ENCODE measurements at regions of chr11 and their contacts with region 1.

Region 1: DNA sequence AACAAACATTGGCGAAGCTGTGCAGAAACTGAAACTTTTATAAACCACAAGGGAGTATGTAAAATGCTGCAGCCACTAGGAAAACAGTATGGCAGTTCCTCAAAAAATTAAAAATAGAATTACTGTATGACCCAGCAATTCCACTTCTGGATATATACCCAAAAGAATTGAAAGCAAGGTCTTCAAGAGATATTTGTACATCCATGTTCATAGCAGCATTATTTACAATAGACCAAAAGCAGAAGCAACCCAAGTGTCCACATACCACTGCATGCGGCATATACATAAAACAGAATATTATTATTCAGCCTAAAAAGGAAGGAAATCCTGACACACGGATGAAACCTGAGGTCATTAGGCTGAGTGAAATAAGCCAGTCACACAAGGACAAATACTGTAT is 85.8 kb downstream of the RELT start:
- DNase-seq: no peak
- ATAC-seq: no peak
- H3K4me3 ChIP-seq: no peak overlapping the region
- H3K27ac ChIP-seq: no peak overlapping the region
- H3K4me1 ChIP-seq: peaks cover 7% of the 10 kb centered on the region
- H3K27me3 ChIP-seq: no peaks in the 10 kb centered on the region
- CTCF ChIP-seq: no peak
- POLR2A ChIP-seq: no peak
- RAD21 ChIP-seq: no peak

Region 2: DNA sequence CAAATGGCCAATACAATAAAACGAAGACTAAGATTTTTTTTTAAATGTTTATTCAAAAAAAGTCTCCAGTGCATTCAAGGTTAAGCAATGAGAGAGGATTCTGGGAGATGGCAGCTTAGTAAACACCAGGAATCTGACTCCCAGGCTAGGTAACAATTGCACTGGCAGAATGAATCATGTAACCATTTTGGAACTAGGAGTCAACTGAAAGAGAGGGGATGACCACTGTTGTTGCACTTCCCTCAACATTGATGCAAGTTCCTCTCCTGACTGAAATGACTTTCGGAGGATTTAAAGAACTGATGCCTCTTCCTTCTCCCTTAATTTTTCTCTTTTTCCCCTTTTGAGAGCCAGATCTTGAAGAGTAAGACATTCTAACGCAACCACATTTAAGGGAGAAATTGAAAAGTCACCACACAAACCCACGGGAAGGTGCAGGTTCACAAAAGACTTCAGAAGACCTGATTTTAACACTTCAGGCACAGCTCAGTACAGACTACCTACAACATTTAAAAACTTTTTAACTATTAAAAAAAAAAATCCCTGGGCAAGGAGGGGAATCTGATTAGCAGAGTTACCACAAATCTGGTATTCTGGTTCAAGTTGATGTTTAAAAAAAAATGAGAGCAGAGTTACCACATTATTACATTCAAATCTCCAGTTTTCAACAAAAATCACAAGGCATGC is 376.6 kb before region 1 on chr11:
- CTCF ChIA-PET with region 1: no interaction called
- POLR2A ChIA-PET with region 1: no interaction called
- dilution Hi-C with region 1: no loop called
- in situ Hi-C with region 1: no loop called
- intact Hi-C with region 1: no loop called
- DNase-seq: peak; percentile 63
- ATAC-seq: peak; percentile 61
- H3K4me3 ChIP-seq: no peak overlapping the region
- H3K27ac ChIP-seq: no peak overlapping the region
- H3K4me1 ChIP-seq: peaks cover 6% of the 10 kb centered on the region
- H3K27me3 ChIP-seq: no peaks in the 10 kb centered on the region
- CTCF ChIP-seq: no peak
- POLR2A ChIP-seq: no peak
- RAD21 ChIP-seq: no peak

Region 3: DNA sequence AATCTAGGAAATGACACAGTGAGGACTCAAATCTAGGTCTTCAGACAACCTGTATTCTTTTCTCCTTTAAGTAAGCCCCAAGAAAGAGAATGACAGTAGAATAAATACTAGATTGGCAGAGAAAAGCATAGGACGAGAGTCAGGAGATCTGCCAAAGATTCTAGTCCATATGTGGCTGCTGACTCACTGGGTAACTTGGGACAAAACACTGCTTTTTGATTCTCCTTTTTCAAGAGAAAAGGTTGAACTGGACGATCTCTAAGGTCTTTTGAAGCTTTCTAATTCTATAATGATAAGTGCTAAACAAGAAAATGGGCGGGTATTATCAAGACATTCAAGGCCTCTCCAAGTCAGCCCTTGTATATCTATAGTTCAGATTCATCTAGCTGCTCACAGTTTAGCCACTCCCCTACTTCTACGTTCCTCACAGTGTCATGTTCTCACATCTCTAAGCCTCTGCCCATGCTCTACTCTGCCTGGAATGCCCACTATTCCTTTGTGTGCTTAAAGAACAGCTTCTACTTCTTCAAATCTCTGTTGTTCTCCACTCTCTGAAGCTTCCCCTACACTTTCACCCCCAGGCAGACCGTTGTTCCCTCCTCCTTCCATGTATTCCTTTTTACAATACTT is 32.7 kb before region 1 on chr11:
- CTCF ChIA-PET with region 1: interaction called, 3 read pairs
- POLR2A ChIA-PET with region 1: no interaction called
- dilution Hi-C with region 1: no loop called
- in situ Hi-C with region 1: no loop called
- intact Hi-C with region 1: loop called (anchors 1 kb)
- DNase-seq: peak; percentile 75
- ATAC-seq: peak; percentile 91
- H3K4me3 ChIP-seq: no peak overlapping the region
- H3K27ac ChIP-seq: peak overlapping the region; percentile 28; the same call in 1 of the 2 replicates
- H3K4me1 ChIP-seq: peaks cover 13% of the 10 kb centered on the region
- H3K27me3 ChIP-seq: no peaks in the 10 kb centered on the region
- CTCF ChIP-seq: no peak
- POLR2A ChIP-seq: no peak
- RAD21 ChIP-seq: no peak

Region 4: GRCh38 chr11:73478738-73479347 is 16.9 kb after region 1 on chr11:
- CTCF ChIA-PET with region 1: interaction called, 18 read pairs
- POLR2A ChIA-PET with region 1: no interaction called
- dilution Hi-C with region 1: no loop called
- in situ Hi-C with region 1: no loop called
- intact Hi-C with region 1: no loop called
- DNase-seq: peak; percentile 42
- ATAC-seq: peak; percentile 89
- H3K4me3 ChIP-seq: no peak overlapping the region
- H3K27ac ChIP-seq: no peak overlapping the region
- H3K4me1 ChIP-seq: peaks cover 3% of the 10 kb centered on the region
- H3K27me3 ChIP-seq: no peaks in the 10 kb centered on the region
- CTCF ChIP-seq: peak; percentile 74
- POLR2A ChIP-seq: no peak
- RAD21 ChIP-seq: peak; percentile 68

Region 5: DNA sequence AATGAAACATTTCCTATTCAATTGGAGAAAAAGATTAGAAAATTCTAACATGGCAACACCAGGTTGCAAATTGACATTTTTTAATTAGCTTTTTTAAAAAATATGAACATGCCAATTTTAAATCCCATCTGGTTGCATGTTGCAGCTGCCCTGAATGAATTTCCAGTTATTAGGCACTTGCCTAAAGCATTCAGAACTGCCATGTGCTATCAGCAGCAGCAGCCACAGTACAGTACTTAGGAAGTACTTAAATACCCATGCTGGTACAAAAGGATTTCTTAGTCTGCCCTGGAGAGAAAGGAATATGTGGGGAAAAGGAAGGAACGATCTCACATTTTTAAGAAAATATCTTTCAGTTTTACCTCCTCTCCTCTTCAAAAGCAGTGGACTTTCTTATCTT is 89.7 kb after region 1 on chr11:
- CTCF ChIA-PET with region 1: no interaction called
- POLR2A ChIA-PET with region 1: no interaction called
- dilution Hi-C with region 1: no loop called
- in situ Hi-C with region 1: no loop called
- intact Hi-C with region 1: no loop called
- DNase-seq: no peak
- ATAC-seq: no peak
- H3K4me3 ChIP-seq: no peak overlapping the region
- H3K27ac ChIP-seq: no peak overlapping the region
- H3K4me1 ChIP-seq: peaks cover 2% of the 10 kb centered on the region; the same call in 1 of the 2 replicates
- H3K27me3 ChIP-seq: no peaks in the 10 kb centered on the region
- CTCF ChIP-seq: no peak
- POLR2A ChIP-seq: no peak
- RAD21 ChIP-seq: no peak